ENCODE measurements at regions of chr6 and their contacts with region 1.

Region 1: DNA sequence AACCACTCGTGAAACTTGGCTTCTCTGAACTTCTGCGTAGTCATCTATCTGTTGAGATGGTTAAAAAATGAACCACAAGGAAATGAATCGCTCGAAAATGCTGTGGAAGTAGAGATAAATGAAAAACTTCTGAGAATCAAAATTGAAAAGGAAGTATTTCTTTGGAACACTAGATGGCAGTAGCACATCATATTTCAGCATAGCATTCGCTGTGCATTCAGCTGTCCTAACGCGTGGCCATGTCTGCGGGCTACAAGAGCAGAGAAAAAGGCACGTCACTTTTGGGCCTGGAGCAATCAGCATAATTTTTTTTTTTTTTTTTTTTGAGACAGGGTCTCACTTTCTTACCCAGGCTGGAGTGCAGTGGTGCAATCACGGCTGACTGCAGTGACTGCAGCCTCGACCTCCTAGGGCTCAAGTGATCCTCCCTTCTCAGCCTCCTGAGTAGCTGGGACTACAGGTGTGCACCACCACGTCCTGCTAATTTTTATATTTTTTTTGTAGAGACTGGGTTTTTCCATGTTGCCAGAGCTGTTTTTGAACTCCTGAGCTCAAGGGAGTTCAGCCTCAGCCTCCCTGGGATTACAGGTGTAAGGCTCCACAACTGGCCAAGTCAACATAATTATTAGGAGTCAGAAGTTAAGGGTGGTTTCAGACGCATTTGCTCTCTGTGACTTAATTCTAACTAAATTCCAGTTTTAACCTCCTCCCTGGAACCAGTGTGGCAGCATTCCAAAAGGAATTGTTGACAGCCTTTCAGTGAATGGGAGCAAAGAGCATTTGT is 8.8 kb upstream of the PERP start:
- H3K4me3 ChIP-seq: no peak overlapping the region
- H3K27ac ChIP-seq: no peak overlapping the region
- H3K4me1 ChIP-seq: no peaks in the 10 kb centered on the region
- CTCF ChIP-seq: peak; percentile 57; the same call in 1 of the 2 replicates

Region 2: DNA sequence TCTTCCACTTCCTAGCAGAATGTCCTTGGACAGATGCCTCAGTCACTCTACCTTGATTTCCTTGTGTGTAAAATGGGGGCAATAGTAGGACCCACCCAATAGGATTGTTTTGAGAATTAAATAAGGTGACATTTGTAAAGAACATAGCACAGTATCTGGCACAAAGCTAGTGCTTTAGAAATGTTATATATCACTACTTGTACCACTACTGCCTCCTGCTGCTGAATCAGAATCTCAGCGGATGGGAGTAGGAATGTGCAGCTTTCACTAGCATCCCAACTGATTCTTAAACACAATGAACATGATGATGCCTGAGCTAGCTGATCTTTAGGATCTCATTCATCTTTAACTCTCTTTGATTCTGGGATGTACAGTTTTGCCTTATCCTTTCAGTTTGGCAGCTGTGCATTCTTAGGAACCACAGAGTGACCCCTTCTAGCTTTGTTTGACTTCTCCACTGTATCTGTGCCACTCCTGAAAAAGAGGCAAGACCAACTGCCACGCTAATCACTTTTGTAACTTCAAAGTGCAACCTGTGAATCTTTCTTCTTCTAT is 95.0 kb after region 1 on chr6:
- CTCF ChIA-PET with region 1: interaction called, 13 read pairs
- POLR2A ChIA-PET with region 1: no interaction called
- H3K4me3 ChIP-seq: no peak overlapping the region
- H3K27ac ChIP-seq: no peak overlapping the region
- H3K4me1 ChIP-seq: no peaks in the 10 kb centered on the region; the same call in 1 of the 2 replicates
- CTCF ChIP-seq: no peak

Region 3: GRCh38 chr6:138403801-138404661 is 288.0 kb after region 1 on chr6 and contains the start of gene HEBP2:
- CTCF ChIA-PET with region 1: interaction called, 26 read pairs
- POLR2A ChIA-PET with region 1: no interaction called
- H3K4me3 ChIP-seq: peak within 1 kb of the TSS; percentile 82
- H3K27ac ChIP-seq: peak within 1 kb of the TSS; percentile 80; the same call in 1 of the 2 replicates
- H3K4me1 ChIP-seq: peaks cover 10% of the 10 kb centered on the region
- CTCF ChIP-seq: peak; percentile 94

Region 4: DNA sequence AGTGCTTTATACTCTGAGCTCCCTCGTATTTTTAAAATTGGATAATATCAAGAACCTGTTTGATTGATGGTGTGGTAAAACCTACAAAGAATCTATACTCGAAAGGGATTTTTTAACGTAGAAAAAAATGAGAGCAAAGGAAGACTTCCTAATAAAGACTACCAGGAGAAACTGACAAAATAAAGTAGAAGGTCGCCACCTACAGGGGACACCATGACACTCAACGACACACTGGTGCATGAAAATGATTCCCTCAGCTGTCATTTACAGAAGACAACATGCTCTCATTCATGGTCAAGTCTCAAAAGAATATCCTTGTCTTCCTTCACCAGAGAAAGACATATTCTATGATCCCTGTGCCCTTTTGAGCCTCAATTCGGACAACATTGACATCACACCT is 393.3 kb after region 1 on chr6:
- CTCF ChIA-PET with region 1: interaction called, 56 read pairs
- POLR2A ChIA-PET with region 1: no interaction called
- H3K4me3 ChIP-seq: no peak overlapping the region
- H3K27ac ChIP-seq: no peak overlapping the region
- H3K4me1 ChIP-seq: peaks cover 4% of the 10 kb centered on the region; the same call in 1 of the 2 replicates
- CTCF ChIP-seq: peak; percentile 56; the same call in 1 of the 2 replicates

Region 5: DNA sequence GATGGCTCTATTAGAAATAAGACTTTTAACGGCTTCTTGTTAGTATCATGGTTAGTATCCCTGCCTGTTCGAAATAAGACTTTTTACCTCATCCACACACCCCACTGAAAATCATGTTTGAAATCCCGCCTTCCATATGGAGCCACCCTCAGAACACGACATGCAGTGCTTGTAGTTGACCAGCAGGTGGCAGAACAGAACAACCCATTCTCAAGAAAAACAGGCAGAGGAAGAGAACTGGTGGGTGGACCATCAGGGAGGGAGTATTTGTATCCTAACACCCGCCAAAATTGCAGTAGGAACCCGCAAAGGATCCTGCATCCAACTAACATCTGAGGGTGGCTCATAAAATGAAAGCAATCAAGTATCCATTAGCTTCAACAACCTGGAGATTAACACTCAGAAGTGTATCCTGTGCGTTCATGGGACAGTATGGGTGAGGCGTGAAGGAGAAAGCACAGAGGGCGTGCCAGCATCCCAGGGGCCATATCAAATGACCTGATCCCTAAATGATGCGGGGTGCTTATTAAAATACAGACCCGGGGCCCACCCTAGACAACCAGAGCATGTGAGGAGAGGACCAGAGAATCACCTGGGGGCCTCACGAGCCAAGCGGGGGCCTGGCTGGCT is 472.9 kb after region 1 on chr6:
- CTCF ChIA-PET with region 1: interaction called, 20 read pairs
- POLR2A ChIA-PET with region 1: no interaction called
- H3K4me3 ChIP-seq: no peak overlapping the region
- H3K27ac ChIP-seq: no peak overlapping the region
- H3K4me1 ChIP-seq: peaks cover 19% of the 10 kb centered on the region
- CTCF ChIP-seq: peak; percentile 83

Region 6: DNA sequence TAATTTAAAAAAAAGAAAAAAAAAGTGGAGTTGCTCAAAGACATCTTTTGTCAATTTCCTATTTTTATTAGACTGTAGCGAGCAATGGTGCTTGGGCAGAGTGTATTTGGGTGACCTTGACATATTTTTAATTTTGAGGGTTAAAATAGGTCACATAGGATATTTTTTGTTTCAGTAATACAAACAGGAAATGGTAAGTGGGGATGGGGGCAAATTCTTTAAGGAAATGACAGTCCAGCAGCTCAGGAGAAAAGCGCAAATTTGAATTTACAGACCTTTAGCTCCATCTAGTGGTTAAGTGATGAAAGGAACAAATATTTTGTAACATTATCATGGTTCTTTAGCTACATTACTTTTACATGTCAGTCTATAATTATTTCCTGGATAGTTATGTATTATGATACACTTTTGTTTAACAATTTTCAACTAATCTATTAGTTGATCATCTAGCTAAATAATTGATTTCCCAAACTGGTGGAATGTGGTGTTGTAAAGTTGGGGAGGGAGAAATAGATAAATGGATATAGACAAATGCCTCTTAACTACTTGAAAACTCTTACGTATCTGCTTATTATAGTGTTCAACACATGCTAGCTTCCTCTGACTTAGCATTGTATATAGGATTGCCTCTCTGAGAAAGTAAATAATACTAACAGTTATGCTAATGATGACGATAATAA is 1248.4 kb after region 1 on chr6:
- CTCF ChIA-PET with region 1: interaction called, 10 read pairs
- POLR2A ChIA-PET with region 1: no interaction called
- H3K4me3 ChIP-seq: no peak overlapping the region
- H3K27ac ChIP-seq: no peak overlapping the region
- H3K4me1 ChIP-seq: peaks cover 15% of the 10 kb centered on the region
- CTCF ChIP-seq: 0 out of 2 replicates have a peak, but pooled peaks have one; percentile 28

Measured in HEK293 (cell line).